ENCODE measurements at regions of chr10 and their contacts with region 1.

Region 1: GRCh38 chr10:102114861-102115618 is 5.1 kb downstream of the LDB1 start:
- H3K4me3 ChIP-seq: peak overlapping the region; percentile 70
- H3K27ac ChIP-seq: peak overlapping the region; percentile 73
- H3K4me1 ChIP-seq: peaks cover 44% of the 10 kb centered on the region
- CTCF ChIP-seq: no peak

Region 2: DNA sequence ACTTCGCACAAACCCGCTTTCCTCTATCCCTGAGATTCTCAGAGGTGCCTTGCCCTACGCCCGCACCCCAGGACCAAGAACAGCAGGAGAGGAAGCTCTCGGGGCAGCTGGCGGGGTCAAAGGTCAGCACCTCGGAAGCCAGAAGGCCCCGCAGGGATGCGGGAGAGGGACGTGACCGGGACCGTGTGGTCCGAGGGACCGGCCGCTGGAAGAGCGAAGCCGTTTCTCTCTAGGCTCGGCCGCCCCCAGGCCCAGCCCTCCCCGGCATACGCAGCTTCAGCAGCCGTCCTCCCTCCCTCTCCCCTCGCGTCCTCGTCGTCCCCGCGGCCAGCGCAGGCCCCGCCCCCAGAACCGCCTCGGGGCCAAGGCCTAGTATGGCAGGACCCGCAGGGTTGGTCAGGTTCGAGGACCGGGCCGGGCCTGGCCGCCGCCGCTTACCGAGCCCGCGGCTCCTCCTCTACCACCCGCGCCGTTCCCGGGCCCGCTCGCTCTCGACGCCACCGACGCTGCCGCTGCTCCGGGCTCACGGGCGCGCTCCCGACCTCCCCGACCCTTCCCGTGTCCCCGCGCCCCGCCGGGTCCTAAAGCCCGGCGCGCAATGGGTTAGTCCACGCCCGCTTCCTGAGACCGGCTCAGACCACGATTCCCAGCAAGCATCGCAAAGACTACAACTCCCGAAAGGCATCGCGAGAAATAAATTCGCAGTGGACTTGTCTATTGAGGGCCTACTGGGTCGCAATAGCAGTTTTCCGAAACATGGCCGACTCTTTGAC is 59.2 kb before region 1 on chr10 and contains the start of gene ARMH3:
- CTCF ChIA-PET with region 1: interaction called, 4 read pairs
- POLR2A ChIA-PET with region 1: interaction called, 11 read pairs
- H3K4me3 ChIP-seq: peak within 1 kb of the TSS; percentile 64
- H3K27ac ChIP-seq: peak within 1 kb of the TSS; percentile 81
- H3K4me1 ChIP-seq: peaks cover 10% of the 10 kb centered on the region
- CTCF ChIP-seq: peak; percentile 14; the same call in 1 of the 2 replicates

Region 3: DNA sequence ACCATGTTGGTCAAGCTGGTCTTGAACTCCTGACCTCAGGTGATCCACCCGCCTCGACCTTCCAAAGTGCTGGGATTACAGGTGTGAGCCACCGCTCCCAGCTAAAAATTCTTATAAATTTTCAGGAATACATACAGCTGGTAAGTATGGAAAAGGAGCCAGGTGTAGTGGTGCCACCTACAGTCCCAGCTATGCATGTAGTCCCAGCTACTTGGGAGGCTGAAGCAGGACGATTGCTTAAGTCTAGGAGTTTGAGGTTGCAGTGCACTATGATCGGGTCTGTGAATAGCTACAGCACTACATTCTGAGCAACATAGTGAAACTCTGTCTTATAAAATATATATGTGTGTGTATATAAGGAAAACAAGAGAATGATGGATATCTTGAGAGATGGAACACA is 13.9 kb before region 1 on chr10:
- CTCF ChIA-PET with region 1: interaction called, 7 read pairs
- POLR2A ChIA-PET with region 1: interaction called, 26 read pairs
- H3K4me3 ChIP-seq: no peak overlapping the region
- H3K27ac ChIP-seq: no peak overlapping the region
- H3K4me1 ChIP-seq: no peaks in the 10 kb centered on the region
- CTCF ChIP-seq: peak; percentile 32; the same call in 1 of the 2 replicates

Region 4: GRCh38 chr10:102280397-102281101 is 165.5 kb after region 1 on chr10:
- CTCF ChIA-PET with region 1: no interaction called
- POLR2A ChIA-PET with region 1: no interaction called
- H3K4me3 ChIP-seq: no peak overlapping the region
- H3K27ac ChIP-seq: no peak overlapping the region
- H3K4me1 ChIP-seq: peaks cover 13% of the 10 kb centered on the region; the same call in 1 of the 2 replicates
- CTCF ChIP-seq: no peak

Measured in HEK293 (cell line).